T-cell (primary cell): ENCODE measurements at regions of chr2 and their contacts with region 1.

Region 1: GRCh38 chr2:148509288-148509902 is 135.2 kb upstream of the EPC2 start:
- DNase-seq: peak; percentile 70 to 89 (median 81)
- ATAC-seq: peak; percentile 99 to 100 (median 100)
- H3K4me3 ChIP-seq: peak overlapping the region; percentile 42 to 53
- H3K4me3 Mint-ChIP-seq: peak overlapping the region; percentile 73 to 76 (median 74)
- H3K27ac ChIP-seq: peak overlapping the region; percentile 15
- H3K27ac Mint-ChIP-seq: peak overlapping the region; percentile 79 to 81
- H3K4me1 ChIP-seq: peaks cover 3 to 6% of the 10 kb centered on the region in 2 experiments
- H3K4me1 Mint-ChIP-seq: peaks cover 11 to 23% (median 23%) of the 10 kb centered on the region in 3 donors
- H3K27me3 ChIP-seq: no peaks in the 10 kb centered on the region
- H3K27me3 Mint-ChIP-seq: no peaks in the 10 kb centered on the region

Region 2: DNA sequence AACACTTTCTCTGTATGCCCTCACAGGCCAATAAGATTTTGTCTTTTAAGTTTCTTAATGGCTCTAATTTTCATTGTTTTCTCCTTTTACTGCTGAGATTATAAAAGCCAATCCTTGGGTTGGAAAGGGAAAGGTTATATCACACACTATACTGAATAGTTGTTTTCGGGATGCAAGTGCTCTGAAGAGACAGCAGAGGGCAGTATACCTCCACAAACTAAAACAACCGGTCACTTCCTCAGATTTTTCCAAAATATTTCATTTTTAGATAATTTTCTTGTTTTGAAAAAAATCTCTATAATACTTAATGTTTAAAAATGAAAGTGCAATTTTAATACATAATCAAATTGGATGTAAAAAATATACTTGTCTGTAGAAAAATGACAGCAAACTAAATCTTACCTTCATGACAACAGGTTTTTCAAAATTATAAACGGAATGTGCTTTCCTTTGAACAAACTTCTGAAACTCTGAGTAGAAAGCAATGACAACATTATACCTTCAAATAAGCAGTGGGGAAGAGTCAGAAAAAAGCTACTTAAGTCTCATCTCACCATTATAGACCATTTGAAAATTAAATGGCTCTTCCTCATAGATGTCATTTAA is 571.5 kb before region 1 on chr2:
- CTCF ChIA-PET with region 1: interaction called in 1 of 2 experiments, 17 read pairs
- POLR2A ChIA-PET with region 1: no interaction called
- DNase-seq: peak in 1 of 35 experiments; percentile 54
- ATAC-seq: peak in 3 of 4 experiments; percentile 38 to 58 (median 47)
- H3K4me3 ChIP-seq: no peak overlapping the region
- H3K4me3 Mint-ChIP-seq: no peak overlapping the region
- H3K27ac ChIP-seq: no peak overlapping the region
- H3K27ac Mint-ChIP-seq: peak overlapping the region; percentile 31 to 34
- H3K4me1 ChIP-seq: no peaks in the 10 kb centered on the region
- H3K4me1 Mint-ChIP-seq: peaks cover 0 to 2% (median 0%) of the 10 kb centered on the region in 3 donors
- H3K27me3 ChIP-seq: no peaks in the 10 kb centered on the region
- H3K27me3 Mint-ChIP-seq: no peaks in the 10 kb centered on the region

Region 3: GRCh38 chr2:147989809-147990403 is 519.5 kb before region 1 on chr2:
- CTCF ChIA-PET with region 1: interaction called, 8 to 53 read pairs
- POLR2A ChIA-PET with region 1: interaction called in 1 of 2 experiments, 3 read pairs
- DNase-seq: peak in 24 of 35 experiments; percentile 2 to 70 (median 19)
- ATAC-seq: peak; percentile 61 to 80 (median 66)
- H3K4me3 ChIP-seq: no peak overlapping the region
- H3K4me3 Mint-ChIP-seq: no peak overlapping the region
- H3K27ac ChIP-seq: no peak overlapping the region
- H3K27ac Mint-ChIP-seq: no peak overlapping the region
- H3K4me1 ChIP-seq: no peaks in the 10 kb centered on the region
- H3K4me1 Mint-ChIP-seq: peaks cover 20 to 40% (median 30%) of the 10 kb centered on the region in 3 donors
- H3K27me3 ChIP-seq: no peaks in the 10 kb centered on the region
- H3K27me3 Mint-ChIP-seq: no peaks in the 10 kb centered on the region

Region 4: GRCh38 chr2:148020111-148021058 is 489.0 kb before region 1 on chr2 and contains the start of gene ORC4:
- CTCF ChIA-PET with region 1: interaction called in 1 of 2 experiments, 12 read pairs
- POLR2A ChIA-PET with region 1: interaction called in 1 of 2 experiments, 8 read pairs
- DNase-seq: peak; percentile 89 to 99 (median 94)
- ATAC-seq: peak; percentile 90 to 93 (median 92)
- H3K4me3 ChIP-seq: peak within 1 kb of the TSS; percentile 83 to 95
- H3K4me3 Mint-ChIP-seq: peak within 1 kb of the TSS; percentile 96 to 99 (median 99)
- H3K27ac ChIP-seq: peak within 1 kb of the TSS; percentile 96
- H3K27ac Mint-ChIP-seq: peak within 1 kb of the TSS; percentile 96 to 98
- H3K4me1 ChIP-seq: peaks cover 16 to 27% of the 10 kb centered on the region in 2 experiments
- H3K4me1 Mint-ChIP-seq: peaks cover 68 to 75% (median 72%) of the 10 kb centered on the region in 3 donors
- H3K27me3 ChIP-seq: no peaks in the 10 kb centered on the region
- H3K27me3 Mint-ChIP-seq: no peaks in the 10 kb centered on the region
- total RNA-seq, gene ORC4: 40.3 to 46.8 (median 42.1) TPM

Region 5: DNA sequence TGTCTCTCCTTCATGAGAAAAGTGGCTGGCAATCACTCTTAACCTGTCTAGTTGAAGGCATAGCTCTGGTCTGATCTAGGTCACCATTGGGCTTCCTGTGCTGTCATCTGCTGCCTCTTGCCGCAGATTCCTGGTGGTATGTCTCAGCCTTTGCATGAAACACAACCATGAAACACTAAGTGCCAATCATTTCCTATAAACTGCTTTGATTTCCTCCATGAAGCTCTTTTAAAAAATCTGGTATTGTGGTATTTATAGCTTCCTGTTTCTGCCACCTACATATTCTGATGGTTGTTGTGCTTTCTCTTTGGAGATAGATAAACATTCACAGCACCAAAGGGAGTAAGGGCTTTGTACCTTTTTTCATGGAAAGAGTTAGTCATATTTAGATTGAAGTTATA is 15.1 kb after region 1 on chr2:
- CTCF ChIA-PET with region 1: interaction called, 4 to 44 read pairs
- POLR2A ChIA-PET with region 1: interaction called, 4 to 10 read pairs
- DNase-seq: peak in 34 of 35 experiments; percentile 38 to 87 (median 66)
- ATAC-seq: peak; percentile 88 to 93 (median 92)
- H3K4me3 ChIP-seq: no peak overlapping the region
- H3K4me3 Mint-ChIP-seq: peak overlapping the region; percentile 6 to 87 (median 37)
- H3K27ac ChIP-seq: peak overlapping the region; percentile 77
- H3K27ac Mint-ChIP-seq: peak overlapping the region; percentile 95 to 99
- H3K4me1 ChIP-seq: peaks cover 69 to 75% of the 10 kb centered on the region in 2 experiments
- H3K4me1 Mint-ChIP-seq: peaks cover 88 to 92% (median 90%) of the 10 kb centered on the region in 3 donors
- H3K27me3 ChIP-seq: no peaks in the 10 kb centered on the region
- H3K27me3 Mint-ChIP-seq: no peaks in the 10 kb centered on the region

Region 6: DNA sequence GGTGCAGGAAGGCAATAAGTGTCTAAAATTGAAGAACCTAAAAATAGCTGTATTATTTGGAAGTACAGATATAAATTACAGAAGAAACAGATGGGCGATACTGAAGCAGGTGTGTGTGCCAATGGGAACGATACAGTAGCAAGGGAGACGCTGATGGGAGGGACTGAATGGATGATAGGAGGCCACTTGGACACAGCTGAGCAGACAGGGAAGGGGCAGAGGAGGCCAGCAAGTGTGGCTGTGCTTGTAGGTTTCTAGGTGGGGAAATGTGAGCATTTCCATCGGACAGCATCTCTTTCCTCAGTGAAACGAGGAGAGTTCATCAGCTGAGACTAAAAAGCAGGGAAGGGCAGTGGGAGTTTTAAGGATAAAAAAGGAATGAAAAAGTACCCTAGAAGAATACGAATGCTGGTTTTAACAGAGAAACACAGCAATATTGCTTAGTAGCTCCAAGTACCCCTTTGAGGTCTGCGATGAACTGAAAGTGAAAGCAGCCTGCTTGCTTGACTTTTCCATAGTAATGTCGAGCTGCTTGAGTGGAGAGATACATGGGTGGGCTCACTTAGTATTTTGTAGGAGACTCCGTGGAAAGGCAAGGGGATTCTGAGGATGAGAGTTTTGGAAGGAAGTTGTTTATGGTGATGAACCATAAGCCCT is 43.4 kb after region 1 on chr2:
- CTCF ChIA-PET with region 1: interaction called in 1 of 2 experiments, 10 read pairs
- POLR2A ChIA-PET with region 1: no interaction called
- DNase-seq: peak in 14 of 35 experiments; percentile 12 to 68 (median 24)
- ATAC-seq: peak; percentile 76 to 87 (median 79)
- H3K4me3 ChIP-seq: peak overlapping the region; percentile 57 to 62
- H3K4me3 Mint-ChIP-seq: no peak overlapping the region
- H3K27ac ChIP-seq: peak overlapping the region; percentile 84
- H3K27ac Mint-ChIP-seq: no peak overlapping the region
- H3K4me1 ChIP-seq: peaks cover 3 to 15% of the 10 kb centered on the region in 2 experiments
- H3K4me1 Mint-ChIP-seq: peaks cover 0 to 4% (median 0%) of the 10 kb centered on the region in 3 donors
- H3K27me3 ChIP-seq: no peaks in the 10 kb centered on the region
- H3K27me3 Mint-ChIP-seq: no peaks in the 10 kb centered on the region